Common myeloid progenitor, CD34-positive (primary cell): ENCODE measurements at regions of chr1 and their contacts with region 1.

Region 1: DNA sequence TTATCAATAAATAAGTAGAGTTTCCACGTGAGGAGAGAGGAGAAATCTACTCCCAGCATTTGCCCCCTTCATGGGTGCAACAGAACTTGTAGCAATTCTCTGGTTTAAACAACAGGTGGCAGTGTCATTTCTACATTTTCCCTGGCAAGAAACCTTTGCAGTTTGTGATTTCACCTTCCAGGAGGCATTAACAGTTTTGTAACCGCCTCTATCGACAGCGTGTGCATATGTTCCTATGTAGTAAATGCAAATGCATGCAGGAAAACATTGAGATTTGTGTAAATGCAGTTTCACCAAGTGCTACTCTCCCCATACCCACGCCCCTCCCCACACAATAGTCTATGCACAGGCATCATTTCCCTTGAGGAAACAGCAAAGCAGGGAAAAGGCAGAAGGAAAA is 494.7 kb downstream of the SMYD3 start:
- DNase-seq: peak; percentile 63 to 85 (median 81)
- H3K4me3 ChIP-seq: no peak overlapping the region
- H3K27ac ChIP-seq: no peak overlapping the region
- H3K4me1 ChIP-seq: peaks cover 0 to 5% (median 2%) of the 10 kb centered on the region in 4 experiments
- H3K27me3 ChIP-seq: no peaks in the 10 kb centered on the region

Region 2: DNA sequence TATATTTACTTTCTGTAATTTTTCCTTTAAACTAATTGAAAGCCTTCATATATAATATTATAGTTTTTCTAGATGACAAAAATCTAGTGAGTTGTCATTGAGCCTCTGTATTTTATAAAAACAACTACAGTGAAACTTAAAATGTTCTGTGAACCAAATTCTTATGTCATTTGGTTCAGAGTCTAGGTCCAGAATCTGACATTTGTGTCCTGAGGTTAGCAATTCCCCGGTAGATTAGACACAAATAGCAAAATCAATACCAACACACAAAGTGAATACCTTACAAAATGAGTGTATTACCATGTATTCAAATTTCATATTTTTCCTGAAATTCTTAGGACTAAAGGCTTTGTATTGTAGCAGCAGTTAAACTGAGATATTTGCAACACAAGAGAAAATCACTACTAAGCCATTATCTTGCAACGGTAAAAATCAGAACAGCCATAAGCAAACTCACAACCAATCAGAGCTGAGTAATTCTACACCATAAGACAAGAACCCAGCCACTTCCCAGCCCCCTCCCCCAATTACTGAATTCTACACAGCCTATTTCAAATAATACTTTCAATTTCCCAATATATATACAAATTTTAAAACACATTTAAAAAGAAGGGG is 78.8 kb before region 1 on chr1:
- CTCF ChIA-PET with region 1: no interaction called
- POLR2A ChIA-PET with region 1: no interaction called
- DNase-seq: no peak
- H3K4me3 ChIP-seq: no peak overlapping the region
- H3K27ac ChIP-seq: no peak overlapping the region
- H3K4me1 ChIP-seq: no peaks in the 10 kb centered on the region
- H3K27me3 ChIP-seq: no peaks in the 10 kb centered on the region

Region 3: GRCh38 chr1:246117066-246117791 is 104.9 kb after region 1 on chr1:
- CTCF ChIA-PET with region 1: interaction called, 18 read pairs
- POLR2A ChIA-PET with region 1: interaction called, 6 read pairs
- DNase-seq: peak; percentile 80 to 92 (median 91)
- H3K4me3 ChIP-seq: peak overlapping the region in 3 of 7 experiments; percentile 9 to 59 (median 34)
- H3K27ac ChIP-seq: peak overlapping the region in 1 of 2 experiments; percentile 49
- H3K4me1 ChIP-seq: peaks cover 11 to 47% (median 27%) of the 10 kb centered on the region in 4 experiments
- H3K27me3 ChIP-seq: no peaks in the 10 kb centered on the region

Region 4: GRCh38 chr1:246280551-246280950 is 268.2 kb after region 1 on chr1:
- CTCF ChIA-PET with region 1: interaction called, 16 read pairs
- POLR2A ChIA-PET with region 1: no interaction called
- DNase-seq: peak; percentile 50 to 71 (median 63)
- H3K4me3 ChIP-seq: no peak overlapping the region
- H3K27ac ChIP-seq: no peak overlapping the region
- H3K4me1 ChIP-seq: peaks cover 0 to 15% (median 7%) of the 10 kb centered on the region in 4 experiments
- H3K27me3 ChIP-seq: no peaks in the 10 kb centered on the region